Psoas muscle (tissue), 8 donors: ENCODE measurements at regions of chr5 and their contacts with region 1.

Region 1: GRCh38 chr5:55534436-55535198 is at the start of gene PLPP1:
- DNase-seq: peak; percentile 93 to 95
- ATAC-seq: peak; percentile 93 to 97 (median 96)
- H3K4me3 ChIP-seq: peak within 1 kb of the TSS; percentile 78
- H3K27ac ChIP-seq: peak within 1 kb of the TSS; percentile 95
- H3K4me1 ChIP-seq: peaks cover 28% of the 10 kb centered on the region
- H3K27me3 ChIP-seq: no peaks in the 10 kb centered on the region
- CTCF ChIP-seq: no peak
- total RNA-seq, gene PLPP1: 25.4 to 57.3 (median 37.6) TPM

Region 2: GRCh38 chr5:55421074-55421529 is 113.5 kb before region 1 on chr5:
- intact Hi-C with region 1: loop called in 1 of 2 experiments (anchors 5 kb)
- DNase-seq: no peak
- ATAC-seq: peak in 3 of 4 donors; percentile 41 to 46 (median 45)
- H3K4me3 ChIP-seq: no peak overlapping the region
- H3K27ac ChIP-seq: no peak overlapping the region
- H3K4me1 ChIP-seq: peaks cover 39% of the 10 kb centered on the region
- H3K27me3 ChIP-seq: no peaks in the 10 kb centered on the region
- CTCF ChIP-seq: no peak

Region 3: GRCh38 chr5:55471468-55471867 is 63.1 kb before region 1 on chr5:
- intact Hi-C with region 1: no loop called
- DNase-seq: no peak
- ATAC-seq: no peak
- H3K4me3 ChIP-seq: no peak overlapping the region
- H3K27ac ChIP-seq: no peak overlapping the region
- H3K4me1 ChIP-seq: peaks cover 26% of the 10 kb centered on the region
- H3K27me3 ChIP-seq: no peaks in the 10 kb centered on the region
- CTCF ChIP-seq: no peak

Region 4: GRCh38 chr5:55601204-55601618 is 66.6 kb after region 1 on chr5:
- intact Hi-C with region 1: loop called in 1 of 2 experiments (anchors 2 kb)
- DNase-seq: peak; percentile 76 to 91
- ATAC-seq: peak; percentile 68 to 87 (median 79)
- H3K4me3 ChIP-seq: peak overlapping the region; percentile 49
- H3K27ac ChIP-seq: peak overlapping the region; percentile 86
- H3K4me1 ChIP-seq: peaks cover 60% of the 10 kb centered on the region
- H3K27me3 ChIP-seq: no peaks in the 10 kb centered on the region
- CTCF ChIP-seq: no peak

Region 5: GRCh38 chr5:55675119-55675518 is 140.5 kb after region 1 on chr5:
- intact Hi-C with region 1: loop called in 1 of 2 experiments (anchors 10 kb)
- DNase-seq: no peak
- ATAC-seq: no peak
- H3K4me3 ChIP-seq: no peak overlapping the region
- H3K27ac ChIP-seq: no peak overlapping the region
- H3K4me1 ChIP-seq: peaks cover 18% of the 10 kb centered on the region
- H3K27me3 ChIP-seq: no peaks in the 10 kb centered on the region
- CTCF ChIP-seq: no peak